ENCODE measurements at regions of chr6 and their contacts with region 1.

Region 1: GRCh38 chr6:142566628-142567396 is 265.0 kb downstream of the ADGRG6 start:
- H3K4me3 ChIP-seq: no peak overlapping the region
- H3K27ac ChIP-seq: no peak overlapping the region
- H3K4me1 ChIP-seq: no peaks in the 10 kb centered on the region
- CTCF ChIP-seq: peak; percentile 70

Region 2: DNA sequence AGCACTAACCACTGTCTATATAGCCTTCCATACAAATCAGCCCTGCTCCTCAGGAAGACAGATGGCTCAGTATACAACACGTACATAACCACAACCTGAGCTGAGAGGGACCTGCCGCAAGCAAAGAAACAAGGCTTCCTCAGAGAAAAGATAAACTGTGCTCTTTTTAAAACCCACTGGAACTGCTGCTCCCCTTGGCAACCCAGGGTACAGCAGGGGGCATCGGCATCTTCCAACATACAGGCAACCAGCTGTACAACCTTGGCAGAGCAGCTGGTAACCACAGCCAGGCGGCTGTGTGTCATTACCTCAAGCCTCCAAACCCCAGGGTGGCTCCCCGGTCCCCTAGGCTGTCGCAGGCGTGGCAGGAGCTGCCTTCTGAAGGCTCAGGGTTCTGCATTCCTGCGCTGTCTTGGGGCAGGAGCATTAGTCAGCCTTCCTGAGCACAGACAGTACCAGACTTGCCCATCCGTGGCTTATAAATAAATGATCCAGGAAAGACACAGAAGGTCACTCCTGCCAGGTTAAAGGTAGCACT is 15.5 kb before region 1 on chr6:
- CTCF ChIA-PET with region 1: interaction called, 19 read pairs
- POLR2A ChIA-PET with region 1: no interaction called
- H3K4me3 ChIP-seq: no peak overlapping the region
- H3K27ac ChIP-seq: no peak overlapping the region
- H3K4me1 ChIP-seq: no peaks in the 10 kb centered on the region
- CTCF ChIP-seq: no peak

Measured in HEK293 (cell line).